ENCODE measurements at regions of chr6 and their contacts with region 1.

Region 1: DNA sequence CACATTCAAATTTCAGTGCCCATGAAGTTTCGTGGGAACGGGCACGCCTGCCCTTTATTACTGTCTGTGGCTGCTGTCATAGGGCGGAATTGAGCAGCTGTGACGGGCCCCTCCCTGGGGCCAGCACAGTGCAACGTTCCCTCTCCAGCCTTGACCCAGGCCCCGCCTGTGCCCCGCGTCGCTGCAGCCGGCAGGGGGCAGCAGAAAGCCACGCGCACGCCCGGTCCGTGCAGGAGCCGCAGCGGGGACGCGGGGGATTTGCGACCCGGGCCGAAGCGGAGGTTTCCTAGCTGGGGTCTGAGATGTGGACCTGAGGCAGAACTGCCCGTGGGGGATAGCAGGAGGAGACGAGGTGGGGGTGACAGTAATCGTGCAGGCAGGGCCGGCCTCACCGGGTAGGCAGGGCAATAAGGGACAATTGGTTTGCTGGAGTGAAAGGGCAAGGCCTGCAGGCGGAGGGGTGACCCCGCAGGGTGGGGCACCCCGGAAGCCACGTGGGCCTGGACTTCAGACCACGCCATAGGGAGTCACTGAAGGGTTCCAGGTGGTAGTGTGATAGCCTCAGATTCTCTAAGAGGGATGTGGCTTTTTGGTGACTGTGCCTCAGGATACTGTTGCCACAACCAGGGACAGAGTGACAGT is 54.4 kb downstream of the SYTL3 start:
- DNase-seq: peak; percentile 80 to 93 (median 86)
- ATAC-seq: peak; percentile 72 to 89 (median 86)
- H3K4me3 ChIP-seq: peak overlapping the region in 10 of 12 donors; percentile 15 to 55 (median 40)
- H3K27ac ChIP-seq: peak overlapping the region; percentile 46 to 90 (median 74)
- H3K4me1 ChIP-seq: peaks cover 6 to 53% (median 38%) of the 10 kb centered on the region in 12 donors
- H3K27me3 ChIP-seq: no peaks in the 10 kb centered on the region
- CTCF ChIP-seq: peak; percentile 97 to 100 (median 99)
- POLR2A ChIP-seq: peak in 1 of 2 donors; percentile 1

Region 2: GRCh38 chr6:158718461-158719046 is 14.3 kb after region 1 on chr6:
- intact Hi-C with region 1: no loop called
- DNase-seq: no peak
- ATAC-seq: peak; percentile 30 to 62 (median 48)
- H3K4me3 ChIP-seq: no peak overlapping the region
- H3K27ac ChIP-seq: peak overlapping the region in 1 of 12 donors; percentile 89
- H3K4me1 ChIP-seq: peaks cover 0 to 66% (median 0%) of the 10 kb centered on the region in 12 donors
- H3K27me3 ChIP-seq: no peaks in the 10 kb centered on the region
- CTCF ChIP-seq: peak; percentile 29 to 65 (median 52)
- POLR2A ChIP-seq: no peak

Region 3: GRCh38 chr6:158769771-158770432 is 65.6 kb after region 1 on chr6:
- intact Hi-C with region 1: loop called in 1 of 10 experiments (anchors 5 kb)
- DNase-seq: peak in 4 of 5 donors; percentile 40 to 81 (median 60)
- ATAC-seq: peak; percentile 36 to 68 (median 59)
- H3K4me3 ChIP-seq: no peak overlapping the region
- H3K27ac ChIP-seq: peak overlapping the region; percentile 6 to 74 (median 62)
- H3K4me1 ChIP-seq: peaks cover 0 to 59% (median 30%) of the 10 kb centered on the region in 12 donors
- H3K27me3 ChIP-seq: no peaks in the 10 kb centered on the region
- CTCF ChIP-seq: no peak
- POLR2A ChIP-seq: no peak

Region 4: DNA sequence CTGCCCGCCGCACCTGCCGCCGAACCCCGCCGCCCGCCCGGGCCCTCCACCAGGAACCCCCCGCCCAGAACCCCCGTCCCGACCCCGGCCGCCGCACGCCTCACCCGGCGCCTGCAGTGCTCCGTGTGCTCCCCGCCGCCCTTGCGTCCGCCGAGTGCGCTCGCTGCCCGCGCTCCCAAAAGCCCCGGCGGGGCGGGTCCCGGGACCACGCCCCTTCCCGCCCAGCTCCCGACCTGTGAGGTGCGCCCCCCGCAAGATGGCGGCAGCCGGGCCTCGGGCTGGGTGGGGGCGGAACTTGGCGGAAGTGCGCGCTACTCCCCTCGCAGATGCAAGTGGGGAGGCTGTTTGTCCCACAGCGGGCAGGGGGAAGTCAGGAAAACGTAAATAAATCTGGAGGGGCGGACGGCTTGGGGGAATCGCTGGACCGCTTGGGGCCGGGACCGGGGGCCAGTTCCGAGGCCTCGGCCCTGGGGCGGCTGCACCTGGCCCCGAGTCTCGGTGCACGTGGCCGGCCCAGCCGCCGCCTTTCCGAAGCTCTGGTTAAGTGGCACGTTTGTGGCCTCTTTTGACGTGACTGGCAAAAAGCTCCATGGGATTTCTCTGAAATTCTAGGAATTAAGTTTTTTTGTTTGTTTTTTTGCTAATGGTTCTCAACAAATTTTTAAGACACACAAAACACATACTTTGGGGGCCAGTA is 115.1 kb after region 1 on chr6 and contains the start of gene EZR:
- intact Hi-C with region 1: loop called in 5 of 10 experiments (anchors 5 to 10 kb)
- DNase-seq: peak; percentile 85 to 92 (median 87)
- ATAC-seq: peak; percentile 44 to 85 (median 78)
- H3K4me3 ChIP-seq: peak within 1 kb of the TSS; percentile 66 to 95 (median 88)
- H3K27ac ChIP-seq: peak within 1 kb of the TSS; percentile 87 to 97 (median 92)
- H3K4me1 ChIP-seq: peaks cover 4 to 39% (median 29%) of the 10 kb centered on the region in 12 donors
- H3K27me3 ChIP-seq: no peaks in the 10 kb centered on the region
- CTCF ChIP-seq: peak in 4 of 12 donors; percentile 10 to 27 (median 18)
- POLR2A ChIP-seq: peak in 1 of 2 donors; percentile 62
- total RNA-seq, gene EZR: 114 to 293 (median 161) TPM

Region 5: GRCh38 chr6:159104163-159104925 is 400.0 kb after region 1 on chr6:
- intact Hi-C with region 1: loop called in 2 of 10 experiments (anchors 10 kb)
- DNase-seq: peak; percentile 50 to 85 (median 62)
- ATAC-seq: peak; percentile 67 to 94 (median 90)
- H3K4me3 ChIP-seq: no peak overlapping the region
- H3K27ac ChIP-seq: no peak overlapping the region
- H3K4me1 ChIP-seq: peaks cover 0 to 47% (median 5%) of the 10 kb centered on the region in 12 donors
- H3K27me3 ChIP-seq: peaks cover 0 to 9% (median 0%) of the 10 kb centered on the region in 9 donors
- CTCF ChIP-seq: peak; percentile 63 to 83 (median 76)
- POLR2A ChIP-seq: no peak

Region 6: DNA sequence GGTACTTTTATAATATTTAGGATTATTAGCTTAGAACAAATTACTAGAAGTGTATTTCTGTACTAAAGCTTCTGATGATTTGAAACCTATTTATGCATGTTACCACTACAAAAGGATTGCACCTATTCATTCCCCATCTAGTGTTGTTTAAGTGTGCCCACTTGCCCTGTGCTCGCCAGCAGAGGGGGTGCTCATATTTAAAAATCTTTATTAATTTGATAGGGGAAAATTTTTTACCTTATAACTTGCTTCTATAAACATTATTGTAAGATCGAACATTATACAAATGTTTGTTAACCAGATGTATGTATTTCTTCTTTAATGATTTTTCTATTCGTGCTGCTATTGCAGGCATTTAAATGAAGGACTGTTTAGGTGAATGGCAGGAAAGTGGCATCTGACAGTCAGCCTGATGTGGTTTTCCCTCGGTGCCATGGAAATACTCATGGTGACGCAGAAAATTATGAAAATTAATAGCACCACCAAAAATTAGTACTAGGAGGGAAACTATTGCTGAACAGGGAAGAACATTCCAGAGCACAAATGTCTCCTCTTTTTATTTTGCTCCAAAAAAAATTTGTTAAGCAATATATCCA is 420.8 kb after region 1 on chr6:
- intact Hi-C with region 1: loop called in 3 of 10 experiments (anchors 10 kb)
- DNase-seq: no peak
- ATAC-seq: no peak
- H3K4me3 ChIP-seq: no peak overlapping the region
- H3K27ac ChIP-seq: peak overlapping the region in 10 of 12 donors; percentile 53 to 96 (median 86)
- H3K4me1 ChIP-seq: peaks cover 0 to 43% (median 12%) of the 10 kb centered on the region in 12 donors
- H3K27me3 ChIP-seq: no peaks in the 10 kb centered on the region
- CTCF ChIP-seq: peak in 8 of 12 donors; percentile 15 to 43 (median 22)
- POLR2A ChIP-seq: no peak